Calu3 (cell line): ENCODE measurements at regions of chr3 and their contacts with region 1.

Region 1: DNA sequence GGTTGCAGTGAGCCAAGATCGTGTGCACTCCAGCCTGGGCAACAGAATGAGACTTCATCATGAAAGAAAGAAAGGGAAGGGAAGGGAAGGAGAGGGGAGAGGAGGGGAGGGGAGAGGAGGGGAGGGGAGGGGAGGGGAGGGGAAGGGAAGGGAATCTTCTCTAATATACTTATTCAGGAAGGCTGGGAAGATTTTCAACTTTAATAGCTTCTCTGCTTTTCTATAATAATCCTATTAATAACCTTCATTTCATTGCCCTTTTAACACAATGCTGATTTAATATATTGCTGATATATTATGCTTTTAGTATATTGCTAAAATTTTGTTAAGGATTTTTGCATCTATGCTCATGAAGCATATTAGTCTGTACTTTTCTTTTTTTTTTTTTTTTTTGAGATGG is 23.4 kb upstream of the RNF7 start:
- DNase-seq: no peak
- H3K4me3 Mint-ChIP-seq: no peak overlapping the region
- H3K27ac Mint-ChIP-seq: no peak overlapping the region
- H3K4me1 Mint-ChIP-seq: peaks cover 5% of the 10 kb centered on the region
- H3K27me3 Mint-ChIP-seq: no peaks in the 10 kb centered on the region
- CTCF ChIP-seq: no peak

Region 2: GRCh38 chr3:141561426-141562034 is 153.1 kb before region 1 on chr3:
- CTCF ChIA-PET with region 1: no interaction called
- intact Hi-C with region 1: no loop called
- DNase-seq: peak; percentile 76
- H3K4me3 Mint-ChIP-seq: no peak overlapping the region
- H3K27ac Mint-ChIP-seq: no peak overlapping the region
- H3K4me1 Mint-ChIP-seq: no peaks in the 10 kb centered on the region
- H3K27me3 Mint-ChIP-seq: no peaks in the 10 kb centered on the region
- CTCF ChIP-seq: peak; percentile 91

Region 3: DNA sequence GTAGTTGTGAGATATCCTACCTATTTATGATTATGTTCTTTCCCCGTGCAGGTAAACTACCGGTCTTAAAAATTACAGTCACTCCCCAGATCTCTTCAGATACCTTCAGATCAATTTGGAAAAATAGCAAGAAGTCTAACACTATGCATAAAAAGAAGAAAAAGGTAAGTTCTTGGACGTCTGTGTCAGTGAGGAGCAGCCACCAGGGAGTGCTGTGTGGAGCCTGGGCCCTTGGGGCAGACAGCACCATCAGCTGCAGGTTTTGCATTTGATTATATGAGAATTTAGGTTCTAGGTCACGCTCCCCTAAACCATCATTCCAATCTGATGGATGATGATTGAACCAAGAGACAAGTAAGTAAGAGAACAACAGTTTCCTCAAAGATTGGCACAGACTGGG is 14.6 kb after region 1 on chr3:
- CTCF ChIA-PET with region 1: interaction called, 13 read pairs
- intact Hi-C with region 1: no loop called
- DNase-seq: no peak
- H3K4me3 Mint-ChIP-seq: no peak overlapping the region
- H3K27ac Mint-ChIP-seq: no peak overlapping the region
- H3K4me1 Mint-ChIP-seq: no peaks in the 10 kb centered on the region
- H3K27me3 Mint-ChIP-seq: peaks cover 6% of the 10 kb centered on the region
- CTCF ChIP-seq: no peak